ENCODE measurements at regions of chr2 and their contacts with region 1.

Region 1: DNA sequence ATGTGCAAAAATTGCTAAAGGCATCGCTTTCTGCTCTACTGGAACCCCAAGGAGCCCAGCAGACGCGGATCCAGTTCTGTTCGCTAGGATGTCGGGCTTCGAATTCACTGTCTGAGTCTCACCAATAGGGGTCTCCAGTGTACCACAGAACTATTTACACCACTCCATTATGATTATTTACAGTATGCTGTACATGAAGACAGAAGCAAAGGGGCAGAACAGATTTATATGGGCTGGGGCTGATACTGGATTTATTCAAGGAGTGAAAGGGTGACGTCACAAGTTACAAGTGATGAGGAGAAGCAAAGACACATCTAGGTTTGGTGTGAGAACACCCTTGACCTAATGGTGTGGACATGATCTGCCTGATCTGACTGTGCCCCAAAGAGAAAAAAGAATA is 185.3 kb upstream of the ATP5MC3 start:
- DNase-seq: peak; percentile 7
- ATAC-seq: peak; percentile 82
- H3K4me3 ChIP-seq: no peak overlapping the region
- H3K27ac ChIP-seq: no peak overlapping the region
- H3K4me1 ChIP-seq: no peaks in the 10 kb centered on the region
- H3K27me3 ChIP-seq: peaks cover 0 to 3% of the 10 kb centered on the region in 2 experiments; a peak in 2 of 4 replicates
- CTCF ChIP-seq: peak; percentile 66 to 74 (median 69)
- EP300 ChIP-seq: no peak
- POLR2A ChIP-seq: no peak
- RAD21 ChIP-seq: peak; percentile 74

Region 2: DNA sequence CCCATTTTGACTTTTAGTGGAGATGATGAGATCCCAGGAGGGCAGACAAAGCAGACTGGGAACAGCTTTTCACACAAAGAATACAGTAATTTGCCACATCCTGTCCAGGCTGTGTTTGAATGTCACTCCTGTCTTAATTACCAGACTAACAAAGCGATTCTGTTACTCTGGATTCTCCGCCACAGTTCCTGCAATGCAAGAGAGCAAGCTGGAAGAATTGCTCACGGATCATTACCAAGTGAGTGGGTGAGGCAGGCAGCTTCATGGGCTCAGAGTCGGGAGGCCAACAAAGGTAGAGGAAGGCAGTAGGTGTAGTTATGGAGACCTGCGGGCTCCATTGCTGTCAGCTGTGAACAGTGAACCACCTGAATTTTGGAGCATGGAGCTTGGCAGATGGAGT is 65.2 kb after region 1 on chr2:
- CTCF ChIA-PET with region 1: no interaction called
- POLR2A ChIA-PET with region 1: no interaction called
- RAD21 ChIA-PET with region 1: no interaction called
- SMC1A ChIA-PET with region 1: no interaction called
- in situ Hi-C with region 1: no loop called
- intact Hi-C with region 1: no loop called
- DNase-seq: no peak
- ATAC-seq: no peak
- H3K4me3 ChIP-seq: no peak overlapping the region
- H3K27ac ChIP-seq: no peak overlapping the region
- H3K4me1 ChIP-seq: no peaks in the 10 kb centered on the region
- H3K27me3 ChIP-seq: no peaks in the 10 kb centered on the region
- CTCF ChIP-seq: no peak
- EP300 ChIP-seq: no peak
- POLR2A ChIP-seq: no peak
- RAD21 ChIP-seq: no peak

Region 3: DNA sequence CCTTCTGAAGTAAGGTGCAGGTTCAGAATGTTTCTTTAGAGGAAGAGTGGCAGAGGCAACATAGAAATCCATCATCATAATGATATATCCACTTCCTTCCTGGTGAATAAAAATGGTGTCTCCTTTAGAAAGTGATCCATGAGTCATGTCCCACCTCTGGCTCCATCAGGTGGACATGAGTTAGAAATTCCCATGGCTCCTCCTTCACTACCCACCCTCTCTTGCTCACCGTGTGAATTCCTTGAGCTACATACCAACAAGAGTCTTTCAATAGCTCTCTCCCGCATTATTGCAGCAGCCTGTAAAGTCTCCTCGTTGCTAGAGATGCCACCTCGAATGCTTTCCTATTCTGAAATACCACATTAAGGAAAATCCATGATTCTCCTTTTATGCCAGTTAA is 317.6 kb after region 1 on chr2:
- CTCF ChIA-PET with region 1: interaction called, 3 read pairs
- POLR2A ChIA-PET with region 1: no interaction called
- RAD21 ChIA-PET with region 1: no interaction called
- SMC1A ChIA-PET with region 1: no interaction called
- in situ Hi-C with region 1: no loop called
- intact Hi-C with region 1: loop called (anchors 10 kb)
- DNase-seq: no peak
- ATAC-seq: no peak
- H3K4me3 ChIP-seq: no peak overlapping the region
- H3K27ac ChIP-seq: no peak overlapping the region
- H3K4me1 ChIP-seq: no peaks in the 10 kb centered on the region
- H3K27me3 ChIP-seq: 0 out of 4 replicates have a peak, but pooled peaks cover 0 to 2% of the 10 kb centered on the region in 2 experiments
- CTCF ChIP-seq: no peak
- EP300 ChIP-seq: no peak
- POLR2A ChIP-seq: no peak
- RAD21 ChIP-seq: no peak